ENCODE measurements at regions of chr5 and their contacts with region 1.

Region 1: GRCh38 chr5:54415896-54416601 is 39.5 kb upstream of the HSPB3 start:
- DNase-seq: no peak
- H3K4me3 ChIP-seq: no peak overlapping the region
- H3K27ac ChIP-seq: no peak overlapping the region
- H3K4me1 ChIP-seq: peaks cover 0 to 16% (median 0%) of the 10 kb centered on the region in 3 donors
- H3K27me3 ChIP-seq: no peaks in the 10 kb centered on the region
- CTCF ChIP-seq: no peak
- POLR2A ChIP-seq: no peak

Region 2: GRCh38 chr5:53956196-53956595 is 459.9 kb before region 1 on chr5:
- intact Hi-C with region 1: no loop called
- DNase-seq: no peak
- H3K4me3 ChIP-seq: no peak overlapping the region
- H3K27ac ChIP-seq: no peak overlapping the region
- H3K4me1 ChIP-seq: no peaks in the 10 kb centered on the region
- H3K27me3 ChIP-seq: no peaks in the 10 kb centered on the region
- CTCF ChIP-seq: no peak
- POLR2A ChIP-seq: no peak

Region 3: DNA sequence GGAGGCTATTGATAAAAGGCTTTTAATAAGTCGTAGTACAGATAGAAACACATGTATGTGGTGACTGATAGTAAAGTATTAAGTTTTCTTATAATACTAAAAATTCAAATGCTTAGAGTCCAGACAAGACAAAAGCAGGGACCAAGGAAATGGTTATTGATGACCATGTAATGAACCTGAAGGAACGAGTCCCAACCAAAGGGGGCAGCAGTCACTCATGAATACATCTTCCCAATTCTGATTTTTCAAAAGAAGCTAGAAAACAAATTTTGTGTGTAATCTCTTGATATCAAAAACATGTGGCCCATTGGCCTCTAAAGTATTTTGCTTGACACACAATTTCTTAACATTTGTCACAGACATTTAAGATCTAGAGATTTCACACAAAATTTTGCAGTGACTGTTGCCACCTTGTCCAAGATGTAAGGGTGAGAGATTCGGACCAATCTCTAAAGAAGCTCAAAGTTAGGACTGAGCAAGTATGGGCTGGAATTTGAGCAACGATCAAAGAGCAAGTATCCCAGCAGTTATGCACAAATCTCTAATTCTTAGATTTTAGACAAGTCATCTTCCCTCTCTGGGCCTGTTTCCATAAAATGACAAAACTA is 172.5 kb before region 1 on chr5:
- intact Hi-C with region 1: loop called (anchors 10 kb)
- DNase-seq: no peak
- H3K4me3 ChIP-seq: no peak overlapping the region
- H3K27ac ChIP-seq: no peak overlapping the region
- H3K4me1 ChIP-seq: peaks cover 0 to 5% (median 0%) of the 10 kb centered on the region in 3 donors
- H3K27me3 ChIP-seq: no peaks in the 10 kb centered on the region
- CTCF ChIP-seq: peak; percentile 37 to 72 (median 55)
- POLR2A ChIP-seq: no peak

Region 4: DNA sequence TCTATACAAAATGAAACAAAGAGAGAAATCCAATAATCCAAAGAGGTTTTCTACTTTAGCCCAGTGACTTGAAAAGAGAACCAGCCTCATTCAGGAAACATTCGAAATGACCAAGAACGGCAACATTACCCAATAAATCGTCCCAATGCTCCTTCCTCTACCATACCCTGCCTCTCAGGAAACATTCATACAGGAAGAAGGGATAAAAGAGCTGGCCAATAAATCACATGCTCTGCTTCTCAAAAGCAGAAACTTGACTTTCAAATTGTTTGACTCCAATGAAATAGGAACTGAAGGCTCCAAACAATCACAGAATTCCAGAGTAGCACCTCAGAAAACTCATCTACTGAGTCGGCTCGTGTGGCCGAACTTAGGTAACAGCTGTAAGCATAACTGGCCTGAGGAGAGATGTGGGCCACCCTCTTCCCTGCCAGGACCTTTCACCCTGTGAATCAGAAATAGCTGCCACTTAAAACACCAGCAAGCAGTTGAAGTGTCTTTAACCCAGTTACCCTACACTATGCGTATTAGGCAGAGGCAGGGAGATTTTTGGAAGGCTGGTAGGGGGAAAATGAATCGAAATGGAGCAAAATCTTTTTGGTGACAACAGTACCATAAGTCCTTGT is 120.3 kb before region 1 on chr5:
- intact Hi-C with region 1: no loop called
- DNase-seq: no peak
- H3K4me3 ChIP-seq: no peak overlapping the region
- H3K27ac ChIP-seq: peak overlapping the region in 1 of 4 donors; percentile 14
- H3K4me1 ChIP-seq: peaks cover 0 to 60% (median 0%) of the 10 kb centered on the region in 3 donors
- H3K27me3 ChIP-seq: no peaks in the 10 kb centered on the region
- CTCF ChIP-seq: no peak
- POLR2A ChIP-seq: no peak

Region 5: DNA sequence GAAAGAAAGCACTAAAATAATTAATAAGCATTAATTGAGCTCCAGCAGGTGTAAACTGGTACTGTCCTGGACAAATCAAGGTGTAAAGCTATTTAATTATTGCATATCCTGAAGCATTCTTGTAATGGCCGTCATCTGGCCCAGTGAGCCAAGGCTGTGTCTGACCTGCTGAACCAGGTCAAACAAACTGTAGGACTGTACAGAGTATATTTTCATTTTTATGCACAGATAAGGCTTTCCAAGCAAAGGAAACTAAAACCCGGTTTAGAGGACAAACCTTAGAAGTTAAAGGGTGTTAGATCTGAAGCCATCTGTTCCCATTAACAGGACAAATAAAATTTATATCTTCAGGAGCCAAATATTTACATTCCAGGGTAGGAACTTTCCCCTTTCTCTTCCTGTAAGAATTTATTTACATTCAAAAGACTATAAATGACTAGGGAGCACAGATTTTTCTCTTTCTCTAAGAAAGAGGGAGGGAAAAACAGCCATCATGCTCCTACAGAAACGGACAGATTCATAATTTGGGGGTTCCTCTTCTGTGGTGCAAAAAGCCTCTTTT is 499.5 kb after region 1 on chr5:
- intact Hi-C with region 1: no loop called
- DNase-seq: no peak
- H3K4me3 ChIP-seq: no peak overlapping the region
- H3K27ac ChIP-seq: no peak overlapping the region
- H3K4me1 ChIP-seq: no peaks in the 10 kb centered on the region
- H3K27me3 ChIP-seq: peaks cover 0 to 45% (median 0%) of the 10 kb centered on the region in 4 donors
- CTCF ChIP-seq: no peak
- POLR2A ChIP-seq: no peak

Measured in esophagus squamous epithelium (tissue), 5 donors.